Activated CD4-positive, alpha-beta memory T cell treated with anti-CD3 and anti-CD28 coated beads for 36 hours (primary cell): ENCODE measurements at regions of chr11 and their contacts with region 1.

Region 1: GRCh38 chr11:61477727-61478148 is 30.8 kb upstream of the LRRC10B start:
- DNase-seq: peak; percentile 59
- H3K4me3 Mint-ChIP-seq: no peak overlapping the region
- H3K27ac Mint-ChIP-seq: no peak overlapping the region
- H3K4me1 Mint-ChIP-seq: peaks cover 9% of the 10 kb centered on the region
- H3K27me3 Mint-ChIP-seq: peaks cover 1% of the 10 kb centered on the region

Region 2: GRCh38 chr11:61509043-61510029 is 31.6 kb after region 1 on chr11:
- CTCF ChIA-PET with region 1: interaction called, 277 read pairs
- POLR2A ChIA-PET with region 1: no interaction called
- intact Hi-C with region 1: no loop called
- DNase-seq: peak; percentile 84
- H3K4me3 Mint-ChIP-seq: peak overlapping the region; percentile 20
- H3K27ac Mint-ChIP-seq: no peak overlapping the region
- H3K4me1 Mint-ChIP-seq: peaks cover 8% of the 10 kb centered on the region
- H3K27me3 Mint-ChIP-seq: peaks cover 44% of the 10 kb centered on the region

Region 3: GRCh38 chr11:61532139-61533038 is 54.7 kb after region 1 on chr11:
- CTCF ChIA-PET with region 1: interaction called, 12 read pairs
- POLR2A ChIA-PET with region 1: no interaction called
- intact Hi-C with region 1: no loop called
- DNase-seq: peak; percentile 57
- H3K4me3 Mint-ChIP-seq: no peak overlapping the region
- H3K27ac Mint-ChIP-seq: no peak overlapping the region
- H3K4me1 Mint-ChIP-seq: no peaks in the 10 kb centered on the region
- H3K27me3 Mint-ChIP-seq: peaks cover 15% of the 10 kb centered on the region

Region 4: GRCh38 chr11:61627567-61628445 is 150.1 kb after region 1 on chr11:
- CTCF ChIA-PET with region 1: interaction called, 3 read pairs
- POLR2A ChIA-PET with region 1: no interaction called
- intact Hi-C with region 1: loop called (anchors 5 kb)
- DNase-seq: peak; percentile 57
- H3K4me3 Mint-ChIP-seq: no peak overlapping the region
- H3K27ac Mint-ChIP-seq: no peak overlapping the region
- H3K4me1 Mint-ChIP-seq: no peaks in the 10 kb centered on the region
- H3K27me3 Mint-ChIP-seq: peaks cover 15% of the 10 kb centered on the region